MCF 10A (cell line): ENCODE measurements at regions of chr6 and their contacts with region 1.

Region 1: DNA sequence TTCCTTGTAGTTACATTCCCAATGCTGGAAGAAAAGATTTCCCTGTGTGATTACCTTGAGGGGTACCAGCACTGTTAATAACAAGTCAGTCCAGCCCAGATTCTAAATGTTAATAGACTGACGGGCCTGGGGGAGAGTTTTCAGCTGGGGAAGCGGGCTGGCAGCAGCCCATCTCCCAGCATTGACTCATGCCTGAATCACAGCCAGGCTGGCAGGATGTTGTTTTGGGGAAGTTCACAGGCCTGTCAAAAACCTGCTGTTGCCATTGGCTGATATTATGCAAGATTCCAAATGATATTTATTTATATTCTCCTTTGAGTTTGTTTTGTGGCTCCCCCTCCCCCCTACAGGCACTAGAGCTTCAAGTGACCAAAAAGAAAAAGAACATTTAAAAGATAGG is 213.9 kb upstream of the CNR1 start:
- DNase-seq: peak; percentile 94
- H3K4me3 Mint-ChIP-seq: peak overlapping the region; percentile 28
- H3K27ac Mint-ChIP-seq: peak overlapping the region; percentile 56
- H3K4me1 Mint-ChIP-seq: peaks cover 54% of the 10 kb centered on the region
- H3K27me3 Mint-ChIP-seq: no peaks in the 10 kb centered on the region
- CTCF ChIP-seq: no peak

Region 2: DNA sequence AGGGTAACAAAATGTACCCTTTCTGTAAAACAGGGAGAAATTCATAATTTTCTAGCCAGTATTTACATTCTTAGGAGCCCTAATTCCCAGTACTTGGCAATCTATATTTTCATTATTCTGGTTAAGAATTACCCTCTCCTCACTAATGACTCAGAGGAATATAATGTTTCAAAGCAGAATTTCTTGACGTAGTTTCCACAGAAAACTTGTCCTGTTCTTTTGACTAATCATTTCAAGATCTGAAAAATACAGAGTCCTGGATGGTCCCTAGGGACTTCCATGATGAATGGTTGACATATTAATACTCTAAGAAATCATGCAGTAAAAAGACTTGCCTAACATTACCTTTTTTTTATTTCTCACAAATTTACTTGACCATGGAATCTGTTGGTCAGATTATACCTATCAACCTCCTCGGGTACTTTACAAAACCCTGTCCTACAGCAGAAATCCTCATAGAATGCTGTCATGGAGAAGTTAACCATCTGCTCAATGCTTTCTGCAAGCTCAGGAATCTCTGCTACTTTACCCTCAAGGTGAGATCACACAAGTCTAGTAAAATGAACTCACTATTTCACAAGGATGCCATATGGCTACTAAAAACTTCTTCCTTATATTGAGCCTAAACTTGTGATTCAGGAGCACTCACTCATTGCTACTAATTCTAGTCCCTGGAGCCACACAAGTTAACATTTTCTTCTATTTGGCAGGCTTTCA is 11.9 kb before region 1 on chr6:
- CTCF ChIA-PET with region 1: interaction called, 4 read pairs
- POLR2A ChIA-PET with region 1: interaction called, 17 read pairs
- intact Hi-C with region 1: no loop called
- DNase-seq: peak; percentile 84
- H3K4me3 Mint-ChIP-seq: peak overlapping the region; percentile 1
- H3K27ac Mint-ChIP-seq: peak overlapping the region; percentile 99
- H3K4me1 Mint-ChIP-seq: peaks cover 56% of the 10 kb centered on the region
- H3K27me3 Mint-ChIP-seq: no peaks in the 10 kb centered on the region
- CTCF ChIP-seq: no peak

Region 3: GRCh38 chr6:88670369-88670768 is 290.3 kb after region 1 on chr6:
- CTCF ChIA-PET with region 1: no interaction called
- POLR2A ChIA-PET with region 1: no interaction called
- intact Hi-C with region 1: no loop called
- DNase-seq: no peak
- H3K4me3 Mint-ChIP-seq: no peak overlapping the region
- H3K27ac Mint-ChIP-seq: no peak overlapping the region
- H3K4me1 Mint-ChIP-seq: no peaks in the 10 kb centered on the region
- H3K27me3 Mint-ChIP-seq: no peaks in the 10 kb centered on the region
- CTCF ChIP-seq: no peak